Psoas muscle (tissue), 8 donors: ENCODE measurements at regions of chr22 and their contacts with region 1.

Region 1: GRCh38 chr22:44107340-44107739 is 73.4 kb upstream of the PARVG start:
- DNase-seq: no peak
- ATAC-seq: no peak
- H3K4me3 ChIP-seq: no peak overlapping the region
- H3K27ac ChIP-seq: no peak overlapping the region
- H3K4me1 ChIP-seq: peaks cover 20% of the 10 kb centered on the region
- H3K27me3 ChIP-seq: no peaks in the 10 kb centered on the region
- CTCF ChIP-seq: no peak

Region 2: DNA sequence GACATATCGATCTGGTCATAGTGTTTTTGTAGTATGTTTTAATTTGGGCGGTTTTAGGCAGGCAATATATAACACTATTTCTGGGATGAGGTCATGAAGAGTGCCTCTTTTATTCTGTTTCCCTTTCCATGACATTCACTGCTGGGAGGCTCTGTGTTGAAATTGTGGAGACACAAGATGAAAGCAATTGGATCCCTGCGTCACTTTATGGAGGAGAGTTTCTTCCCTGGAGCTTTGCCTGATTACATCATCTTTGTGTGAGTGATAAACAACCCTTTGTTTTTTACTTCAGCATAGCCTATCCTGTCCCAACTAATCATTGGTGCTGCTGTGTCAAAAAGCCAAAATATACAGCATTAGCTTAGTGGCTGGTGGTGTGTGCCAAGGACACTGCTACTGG is 122.0 kb after region 1 on chr22:
- intact Hi-C with region 1: no loop called
- DNase-seq: no peak
- ATAC-seq: no peak
- H3K4me3 ChIP-seq: no peak overlapping the region
- H3K27ac ChIP-seq: no peak overlapping the region
- H3K4me1 ChIP-seq: no peaks in the 10 kb centered on the region
- H3K27me3 ChIP-seq: peaks cover 0 to 4% (median 0%) of the 10 kb centered on the region in 3 donors
- CTCF ChIP-seq: no peak

Region 3: GRCh38 chr22:44625981-44626687 is 518.8 kb after region 1 on chr22:
- intact Hi-C with region 1: loop called in 1 of 2 experiments (anchors 10 kb)
- DNase-seq: peak; percentile 68 to 80
- ATAC-seq: peak; percentile 81 to 94 (median 87)
- H3K4me3 ChIP-seq: no peak overlapping the region
- H3K27ac ChIP-seq: no peak overlapping the region
- H3K4me1 ChIP-seq: no peaks in the 10 kb centered on the region
- H3K27me3 ChIP-seq: peaks cover 0 to 30% (median 7%) of the 10 kb centered on the region in 3 donors
- CTCF ChIP-seq: peak; percentile 97